Gastrocnemius medialis (tissue), 4 donors: ENCODE measurements at regions of chr2 and their contacts with region 1.

Region 1: GRCh38 chr2:213151437-213152064 is at the start of gene IKZF2:
- DNase-seq: peak; percentile 73 to 83
- ATAC-seq: peak; percentile 85 to 87
- H3K4me3 ChIP-seq: peak within 1 kb of the TSS; percentile 72 to 94 (median 89)
- H3K27ac ChIP-seq: peak within 1 kb of the TSS; percentile 93 to 99 (median 98)
- H3K4me1 ChIP-seq: peaks cover 30 to 36% of the 10 kb centered on the region in 2 donors
- H3K27me3 ChIP-seq: no peaks in the 10 kb centered on the region
- CTCF ChIP-seq: no peak
- POLR2A ChIP-seq: peak; percentile 61 to 69
- total RNA-seq, gene IKZF2: 4.9 to 15.5 (median 6.0) TPM

Region 2: DNA sequence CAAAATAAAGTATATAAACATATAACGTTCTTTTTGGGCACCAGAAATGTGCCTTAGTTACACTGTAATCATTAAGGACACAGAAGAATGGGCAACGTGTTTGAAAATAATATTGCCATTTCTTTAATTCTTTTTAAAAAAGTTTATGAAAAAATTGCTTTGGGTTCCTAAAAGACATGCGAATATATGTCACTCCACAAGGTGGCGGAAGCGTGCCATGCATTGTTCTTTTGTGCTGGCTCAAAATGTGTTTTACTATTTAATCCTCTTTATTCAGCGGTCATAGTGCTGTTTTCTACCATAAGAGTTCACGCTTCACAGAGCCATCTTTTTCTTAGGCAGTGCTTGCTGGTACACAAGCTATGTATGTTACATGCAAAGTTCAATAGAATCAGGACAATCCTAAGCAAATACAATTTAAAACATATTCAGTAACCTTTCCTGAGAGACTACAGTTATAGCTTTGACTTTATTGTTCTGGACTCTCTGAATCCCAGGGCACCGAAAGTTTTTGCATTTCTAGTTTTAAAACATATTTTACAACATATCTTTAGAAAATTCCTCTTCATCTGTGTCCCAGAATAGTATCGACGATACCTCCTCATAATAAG is 465.2 kb before region 1 on chr2:
- in situ Hi-C with region 1: loop called in 2 of 4 experiments (anchors 5 to 10 kb)
- intact Hi-C with region 1: loop called (anchors 1 kb)
- DNase-seq: peak; percentile 15 to 31
- ATAC-seq: no peak
- H3K4me3 ChIP-seq: peak overlapping the region in 1 of 4 donors; percentile 4
- H3K27ac ChIP-seq: no peak overlapping the region
- H3K4me1 ChIP-seq: no peaks in the 10 kb centered on the region
- H3K27me3 ChIP-seq: no peaks in the 10 kb centered on the region
- CTCF ChIP-seq: peak; percentile 51 to 83 (median 59)
- POLR2A ChIP-seq: no peak

Region 3: GRCh38 chr2:212777020-212777491 is 374.5 kb before region 1 on chr2:
- in situ Hi-C with region 1: loop called in 3 of 4 experiments (anchors 5 to 10 kb)
- intact Hi-C with region 1: no loop called
- DNase-seq: no peak
- ATAC-seq: no peak
- H3K4me3 ChIP-seq: peak overlapping the region in 1 of 4 donors; percentile 22
- H3K27ac ChIP-seq: no peak overlapping the region
- H3K4me1 ChIP-seq: no peaks in the 10 kb centered on the region
- H3K27me3 ChIP-seq: no peaks in the 10 kb centered on the region
- CTCF ChIP-seq: peak in 4 of 5 experiments; percentile 48 to 66 (median 63)
- POLR2A ChIP-seq: no peak

Region 4: DNA sequence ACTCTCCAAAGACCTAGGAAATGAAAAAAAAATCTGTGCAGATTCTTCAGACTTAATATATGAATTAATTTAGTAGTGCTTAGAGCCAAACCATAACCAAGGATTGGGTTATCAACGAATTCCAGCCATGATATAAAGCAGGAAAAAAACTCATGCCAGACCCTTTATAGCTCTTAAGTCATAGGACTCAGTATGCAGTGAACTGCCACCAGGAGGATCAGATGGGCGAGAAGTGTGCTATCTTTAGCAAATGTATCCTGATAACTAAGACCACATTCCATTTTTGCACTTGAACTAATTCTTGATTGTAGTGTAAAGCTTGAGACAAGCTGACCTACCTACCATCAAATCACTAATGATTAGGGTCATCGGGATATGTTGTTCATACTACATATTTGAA is 178.2 kb before region 1 on chr2:
- in situ Hi-C with region 1: no loop called
- intact Hi-C with region 1: loop called (anchors 2 kb)
- DNase-seq: peak in 1 of 2 donors; percentile 13
- ATAC-seq: peak; percentile 64 to 84
- H3K4me3 ChIP-seq: no peak overlapping the region
- H3K27ac ChIP-seq: peak overlapping the region; percentile 27 to 57 (median 45)
- H3K4me1 ChIP-seq: peaks cover 32 to 50% of the 10 kb centered on the region in 2 donors
- H3K27me3 ChIP-seq: no peaks in the 10 kb centered on the region
- CTCF ChIP-seq: peak in 1 of 5 experiments; percentile 27
- POLR2A ChIP-seq: no peak

Region 5: DNA sequence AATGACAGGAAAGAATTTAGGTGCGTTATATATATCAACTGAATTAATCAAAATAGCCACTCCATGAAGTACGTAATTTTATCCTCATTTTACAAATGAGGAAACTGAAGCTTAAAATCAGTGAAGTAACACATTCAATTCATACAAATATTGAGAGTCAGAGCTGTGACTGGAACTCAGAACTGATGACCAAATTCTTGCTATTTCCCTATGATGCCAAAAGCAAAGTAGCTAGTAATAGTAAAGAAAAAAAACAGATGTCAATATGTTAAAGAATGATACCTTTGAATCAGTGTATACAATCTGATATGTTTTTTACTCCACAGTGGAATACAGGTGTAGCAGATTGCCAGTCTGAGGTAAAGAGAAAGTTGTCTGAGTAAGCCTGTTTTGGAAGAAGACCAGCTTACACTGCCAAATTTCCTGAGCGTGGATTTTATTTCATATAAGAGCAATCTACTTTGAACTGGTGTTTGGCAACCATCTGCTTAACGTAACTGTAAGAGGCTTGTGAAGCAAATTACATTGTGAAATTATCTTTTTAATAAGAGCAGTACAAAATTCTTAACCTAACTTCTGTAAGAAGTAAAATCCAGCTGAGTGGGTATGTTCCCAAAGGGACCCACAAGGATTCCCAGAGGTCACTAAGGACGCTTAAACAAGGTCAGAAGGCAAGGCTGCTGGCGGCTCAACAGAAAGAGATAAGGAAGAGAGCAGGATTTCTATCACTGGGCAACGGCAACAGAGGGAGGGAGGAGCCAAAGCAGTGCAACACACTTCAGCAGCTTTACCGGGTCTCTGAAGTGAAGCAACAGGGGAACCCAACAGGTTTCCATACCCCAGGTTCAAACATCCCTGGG is 85.7 kb before region 1 on chr2:
- in situ Hi-C with region 1: no loop called
- intact Hi-C with region 1: loop called (anchors 2 kb)
- DNase-seq: no peak
- ATAC-seq: peak; percentile 45 to 86
- H3K4me3 ChIP-seq: peak overlapping the region; percentile 28 to 38 (median 30)
- H3K27ac ChIP-seq: peak overlapping the region; percentile 39 to 66 (median 44)
- H3K4me1 ChIP-seq: peaks cover 21 to 26% of the 10 kb centered on the region in 2 donors
- H3K27me3 ChIP-seq: no peaks in the 10 kb centered on the region
- CTCF ChIP-seq: no peak
- POLR2A ChIP-seq: no peak

Region 6: GRCh38 chr2:213104092-213104902 is 47.3 kb before region 1 on chr2:
- in situ Hi-C with region 1: no loop called
- intact Hi-C with region 1: loop called (anchors 2 kb)
- DNase-seq: peak; percentile 29
- ATAC-seq: peak; percentile 58 to 76
- H3K4me3 ChIP-seq: peak overlapping the region; percentile 37 to 48 (median 46)
- H3K27ac ChIP-seq: peak overlapping the region; percentile 74 to 84 (median 77)
- H3K4me1 ChIP-seq: peaks cover 59 to 71% of the 10 kb centered on the region in 2 donors
- H3K27me3 ChIP-seq: no peaks in the 10 kb centered on the region
- CTCF ChIP-seq: no peak
- POLR2A ChIP-seq: no peak

Region 7: GRCh38 chr2:214569419-214570035 is 1418.0 kb after region 1 on chr2:
- in situ Hi-C with region 1: no loop called
- intact Hi-C with region 1: no loop called
- DNase-seq: no peak
- ATAC-seq: no peak
- H3K4me3 ChIP-seq: no peak overlapping the region
- H3K27ac ChIP-seq: no peak overlapping the region
- H3K4me1 ChIP-seq: no peaks in the 10 kb centered on the region
- H3K27me3 ChIP-seq: no peaks in the 10 kb centered on the region
- CTCF ChIP-seq: no peak
- POLR2A ChIP-seq: no peak